ENCODE measurements at regions of chr7 and their contacts with region 1.

Region 1: DNA sequence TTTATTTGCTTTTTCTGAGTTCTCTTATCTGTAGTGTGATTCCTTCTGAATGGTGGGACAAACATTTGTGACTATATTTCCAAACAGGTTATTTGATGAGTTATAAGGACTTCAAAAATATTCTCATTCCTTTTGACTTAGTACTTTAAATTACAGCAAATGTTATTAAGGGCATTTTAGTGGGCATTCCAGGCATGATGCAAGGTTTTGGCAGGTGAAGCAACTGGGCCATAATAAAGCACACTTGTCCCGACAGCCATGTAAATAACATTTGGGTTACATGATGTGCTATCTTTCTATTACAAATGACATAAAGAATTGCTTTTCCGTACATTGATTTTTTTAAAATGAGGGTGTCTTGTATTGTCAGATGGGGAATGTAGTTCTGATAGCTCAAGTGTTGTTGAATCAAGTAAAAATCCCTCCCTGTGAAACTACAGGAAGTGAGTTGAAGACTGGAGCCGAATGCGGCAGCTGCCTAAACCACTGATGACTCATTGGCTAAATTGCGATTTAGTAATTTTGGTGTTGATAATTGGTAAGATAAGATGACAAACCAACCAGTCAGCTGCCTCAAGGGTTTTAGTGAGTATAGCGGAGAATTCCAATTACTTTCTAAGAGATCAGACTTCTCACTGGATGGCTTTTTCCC is 231.3 kb upstream of the NPY start:
- DNase-seq: no peak
- ATAC-seq: no peak
- H3K4me3 ChIP-seq: no peak overlapping the region
- H3K27ac ChIP-seq: no peak overlapping the region
- H3K4me1 ChIP-seq: no peaks in the 10 kb centered on the region
- H3K27me3 ChIP-seq: no peaks in the 10 kb centered on the region
- CTCF ChIP-seq: no peak

Region 2: DNA sequence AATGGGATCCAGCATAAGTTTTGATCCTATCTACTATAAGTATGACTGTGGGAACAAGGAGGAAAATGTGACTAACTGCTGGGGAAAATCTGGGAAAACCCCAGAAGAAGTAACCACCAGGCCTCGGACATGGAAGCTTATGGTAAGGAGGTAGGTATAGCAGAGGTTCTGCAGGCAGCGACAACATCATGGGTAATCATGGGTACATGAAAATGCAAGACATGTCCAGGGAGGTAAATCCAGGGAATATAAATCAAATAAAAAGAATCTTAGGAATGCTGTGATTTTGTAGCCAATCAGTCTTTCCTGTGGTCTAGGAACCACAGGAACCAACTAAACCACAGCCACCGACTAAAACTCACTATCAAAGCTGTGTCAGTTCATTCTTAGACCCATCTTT is 63.0 kb after region 1 on chr7:
- intact Hi-C with region 1: loop called in 1 of 3 experiments (anchors 10 kb)
- DNase-seq: no peak
- ATAC-seq: no peak
- H3K4me3 ChIP-seq: no peak overlapping the region
- H3K27ac ChIP-seq: no peak overlapping the region
- H3K4me1 ChIP-seq: no peaks in the 10 kb centered on the region
- H3K27me3 ChIP-seq: no peaks in the 10 kb centered on the region
- CTCF ChIP-seq: no peak

Region 3: GRCh38 chr7:24172856-24173255 is 120.2 kb after region 1 on chr7:
- intact Hi-C with region 1: no loop called
- DNase-seq: no peak
- ATAC-seq: peak in 2 of 4 donors; percentile 38 to 56
- H3K4me3 ChIP-seq: no peak overlapping the region
- H3K27ac ChIP-seq: no peak overlapping the region
- H3K4me1 ChIP-seq: peaks cover 0 to 7% (median 0%) of the 10 kb centered on the region in 3 donors
- H3K27me3 ChIP-seq: no peaks in the 10 kb centered on the region
- CTCF ChIP-seq: no peak